ENCODE measurements at regions of chr16 and their contacts with region 1.

Region 1: DNA sequence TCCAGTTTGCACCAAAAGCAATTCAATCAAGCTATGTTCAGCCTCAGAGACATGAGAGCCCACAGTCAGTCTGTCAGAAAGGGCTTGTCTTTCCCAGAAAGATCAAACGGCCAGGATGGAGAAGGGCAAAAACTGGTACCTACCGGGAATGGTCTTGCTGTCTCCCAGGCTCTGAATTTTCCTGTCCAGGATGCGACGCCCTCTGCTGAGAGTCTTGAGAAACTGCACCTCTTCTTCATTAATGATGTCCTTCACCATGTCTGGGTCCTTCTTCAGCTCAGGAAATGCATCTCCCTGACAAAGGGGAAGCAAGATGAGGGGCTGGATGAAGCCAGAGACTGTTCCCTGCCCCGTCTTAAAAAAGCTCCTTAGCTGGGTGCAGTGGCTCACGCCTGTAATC is 15.8 kb upstream of the EXOSC6 start:
- DNase-seq: no peak
- H3K4me3 Mint-ChIP-seq: no peak overlapping the region
- H3K27ac Mint-ChIP-seq: no peak overlapping the region
- H3K4me1 Mint-ChIP-seq: no peaks in the 10 kb centered on the region
- H3K27me3 Mint-ChIP-seq: no peaks in the 10 kb centered on the region

Region 2: DNA sequence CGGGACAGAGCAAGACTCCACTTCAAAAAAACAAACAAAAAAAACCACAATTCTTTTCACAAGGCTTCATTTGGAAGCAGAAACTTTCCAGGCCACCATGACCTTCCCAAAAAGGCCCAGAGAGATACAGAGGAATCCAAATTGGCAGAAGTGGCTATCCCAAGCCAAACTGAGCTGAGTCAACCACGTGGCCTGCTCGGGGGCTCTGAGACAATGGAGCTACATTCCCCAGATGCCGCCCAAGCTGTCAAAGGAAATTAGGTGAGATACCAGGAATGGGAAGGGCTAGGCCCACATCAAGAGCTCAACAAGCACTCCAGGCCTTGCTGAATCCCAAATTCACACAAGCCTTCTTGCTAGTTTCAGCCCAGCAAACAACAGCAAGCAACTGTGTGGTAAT is 10.1 kb before region 1 on chr16:
- CTCF ChIA-PET with region 1: interaction called, 19 read pairs
- POLR2A ChIA-PET with region 1: interaction called, 5 read pairs
- DNase-seq: no peak
- H3K4me3 Mint-ChIP-seq: no peak overlapping the region
- H3K27ac Mint-ChIP-seq: no peak overlapping the region
- H3K4me1 Mint-ChIP-seq: no peaks in the 10 kb centered on the region
- H3K27me3 Mint-ChIP-seq: no peaks in the 10 kb centered on the region

Region 3: GRCh38 chr16:70490261-70490803 is 222.8 kb after region 1 on chr16:
- CTCF ChIA-PET with region 1: no interaction called
- POLR2A ChIA-PET with region 1: no interaction called
- DNase-seq: no peak
- H3K4me3 Mint-ChIP-seq: no peak overlapping the region
- H3K27ac Mint-ChIP-seq: no peak overlapping the region
- H3K4me1 Mint-ChIP-seq: peaks cover 14% of the 10 kb centered on the region
- H3K27me3 Mint-ChIP-seq: no peaks in the 10 kb centered on the region